Psoas muscle (tissue), 8 donors: ENCODE measurements at regions of chr7 and their contacts with region 1.

Region 1: DNA sequence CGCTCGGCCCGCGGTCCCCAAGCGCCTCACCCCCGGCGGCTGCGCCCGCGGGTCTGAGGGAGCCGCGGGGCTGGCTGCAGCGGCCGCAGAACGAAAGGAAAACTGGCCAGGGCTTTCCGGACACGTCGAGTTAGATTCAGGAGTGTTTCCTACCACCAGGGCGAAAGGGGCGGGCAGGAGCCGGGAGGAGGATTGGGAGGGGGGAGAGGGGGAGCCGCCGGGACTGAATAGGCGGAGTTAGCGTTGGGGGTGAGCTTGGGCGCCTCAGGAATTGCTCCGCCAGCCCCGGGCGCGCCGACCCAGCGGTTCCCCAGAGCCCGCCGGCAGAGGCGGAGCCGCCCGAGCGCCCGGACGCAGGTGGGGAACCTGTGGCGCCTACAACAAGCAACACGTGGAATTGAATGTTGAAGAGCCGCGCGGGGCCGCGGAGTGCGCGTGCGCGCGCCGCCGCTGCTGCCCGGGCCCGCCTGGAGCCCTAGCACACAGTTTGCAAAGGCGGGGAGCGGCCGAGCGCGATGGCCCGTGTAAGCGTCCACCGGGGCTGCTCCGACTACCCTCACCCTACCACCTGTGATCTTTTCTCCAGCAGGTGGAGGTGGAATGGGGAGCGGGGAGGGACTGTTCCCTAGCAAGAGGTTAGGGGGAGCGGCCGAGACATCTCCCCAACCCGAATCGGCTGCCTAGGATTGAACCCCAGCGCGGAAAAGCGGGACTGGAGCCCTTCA is at the start of gene CADPS2:
- DNase-seq: peak; percentile 82 to 88
- ATAC-seq: peak; percentile 70 to 88 (median 84)
- H3K4me3 ChIP-seq: peak within 1 kb of the TSS; percentile 85
- H3K27ac ChIP-seq: peak within 1 kb of the TSS; percentile 73
- H3K4me1 ChIP-seq: peaks cover 4% of the 10 kb centered on the region
- H3K27me3 ChIP-seq: peaks cover 0 to 32% (median 0%) of the 10 kb centered on the region in 3 donors
- CTCF ChIP-seq: no peak
- total RNA-seq, gene CADPS2: 2.1 to 3.6 (median 3.2) TPM

Region 2: DNA sequence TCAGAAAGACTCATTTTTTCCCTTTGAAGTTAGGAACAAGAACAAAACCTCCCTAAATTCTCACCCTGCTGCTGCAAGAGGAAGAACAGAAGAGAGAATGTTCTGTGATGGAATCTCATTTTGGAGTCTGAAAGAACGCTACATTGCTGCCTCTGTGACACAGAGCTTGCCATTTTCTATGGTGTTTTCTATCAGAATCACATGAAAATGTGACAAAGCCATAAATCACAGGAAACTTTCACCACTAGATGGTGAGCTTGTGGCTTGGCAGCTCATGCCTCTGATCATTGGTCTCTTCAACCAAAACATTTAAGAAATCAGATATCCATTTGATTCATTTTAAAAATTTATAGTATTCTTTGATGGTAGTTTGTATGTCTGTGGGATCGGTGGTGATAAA is 83.2 kb before region 1 on chr7:
- intact Hi-C with region 1: loop called in 1 of 2 experiments (anchors 2 kb)
- DNase-seq: no peak
- ATAC-seq: no peak
- H3K4me3 ChIP-seq: no peak overlapping the region
- H3K27ac ChIP-seq: no peak overlapping the region
- H3K4me1 ChIP-seq: no peaks in the 10 kb centered on the region
- H3K27me3 ChIP-seq: no peaks in the 10 kb centered on the region
- CTCF ChIP-seq: peak; percentile 17

Region 3: GRCh38 chr7:123154231-123154860 is 267.8 kb after region 1 on chr7:
- intact Hi-C with region 1: loop called in 1 of 2 experiments (anchors 5 kb)
- DNase-seq: peak; percentile 29 to 42
- ATAC-seq: peak; percentile 61 to 89 (median 80)
- H3K4me3 ChIP-seq: no peak overlapping the region
- H3K27ac ChIP-seq: no peak overlapping the region
- H3K4me1 ChIP-seq: no peaks in the 10 kb centered on the region
- H3K27me3 ChIP-seq: no peaks in the 10 kb centered on the region
- CTCF ChIP-seq: peak; percentile 74